GM10248 (cell line): ENCODE measurements at regions of chr22 and their contacts with region 1.

Region 1: DNA sequence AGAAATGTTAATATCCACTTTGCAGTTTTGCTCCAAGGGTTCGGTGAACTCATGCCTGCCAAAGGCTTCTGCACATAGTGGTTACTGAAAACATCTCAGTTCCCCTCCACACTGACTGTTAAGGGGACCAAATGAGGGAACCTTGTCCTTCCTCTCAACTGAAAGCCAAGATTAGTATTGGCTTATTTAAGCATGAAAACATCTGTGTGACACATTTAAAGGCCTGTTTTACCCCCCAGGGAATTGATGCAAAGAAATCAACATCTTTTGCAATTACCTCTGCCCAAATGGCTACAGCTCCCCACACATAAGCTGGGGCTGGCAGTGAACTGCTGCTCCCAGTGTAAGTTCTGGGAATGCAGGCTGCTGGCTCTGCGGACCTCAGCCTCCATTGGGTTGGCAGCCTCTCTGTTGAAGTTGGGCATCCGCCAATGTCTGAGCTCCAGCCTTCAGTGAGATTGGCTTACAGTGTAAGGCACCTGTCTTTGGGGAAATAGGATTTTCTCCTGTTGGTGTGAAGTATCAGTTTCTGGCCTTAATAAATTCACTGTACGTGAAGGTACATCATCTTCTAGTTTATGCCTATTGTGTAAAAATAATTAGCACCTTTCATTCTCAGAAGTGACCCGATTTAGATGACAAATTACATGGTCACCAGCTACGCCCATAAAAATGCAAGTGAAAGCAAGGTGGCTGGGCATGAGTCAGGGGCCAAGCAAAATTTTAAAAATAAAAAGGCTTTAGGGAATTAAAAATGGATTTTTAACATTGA is 213.4 kb upstream of the SYN3 start:
- DNase-seq: peak; percentile 57
- CTCF ChIP-seq: no peak

Region 2: GRCh38 chr22:33038131-33038772 is 233.3 kb before region 1 on chr22:
- CTCF ChIA-PET with region 1: no interaction called
- POLR2A ChIA-PET with region 1: no interaction called
- DNase-seq: no peak
- CTCF ChIP-seq: no peak

Region 3: GRCh38 chr22:33255791-33256190 is 15.8 kb before region 1 on chr22:
- CTCF ChIA-PET with region 1: interaction called, 50 read pairs
- POLR2A ChIA-PET with region 1: no interaction called
- DNase-seq: no peak
- CTCF ChIP-seq: no peak

Region 4: GRCh38 chr22:33288078-33288477 is 16.5 kb after region 1 on chr22:
- CTCF ChIA-PET with region 1: interaction called, 48 read pairs
- POLR2A ChIA-PET with region 1: no interaction called
- DNase-seq: no peak
- CTCF ChIP-seq: no peak

Region 5: DNA sequence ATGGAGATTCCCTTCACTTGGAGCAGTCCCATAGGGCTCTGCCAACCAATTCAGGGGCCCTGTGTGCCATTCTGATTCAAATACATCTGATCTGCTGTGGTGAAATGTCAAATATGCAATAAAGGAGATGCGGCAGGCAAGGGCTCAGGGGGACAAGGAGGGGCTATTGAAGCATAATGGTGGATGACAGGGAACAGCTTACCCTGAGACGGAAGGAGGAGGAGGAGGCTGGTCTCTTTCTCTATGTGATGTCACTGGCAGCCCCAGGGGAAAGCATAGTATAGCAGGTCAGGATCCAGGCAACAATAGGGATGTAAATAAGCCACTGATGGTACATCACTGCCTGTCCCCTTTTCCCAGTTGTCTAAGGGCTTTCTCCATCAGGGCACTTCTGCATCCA is 137.5 kb after region 1 on chr22:
- CTCF ChIA-PET with region 1: no interaction called
- POLR2A ChIA-PET with region 1: no interaction called
- DNase-seq: no peak
- CTCF ChIP-seq: no peak